K562 (cell line): ENCODE measurements at regions of chr13 and their contacts with region 1.

Region 1: GRCh38 chr13:95480131-95480545 is 72.4 kb upstream of the CLDN10 start:
- DNase-seq: no peak
- ATAC-seq: no peak
- H3K4me3 ChIP-seq: no peak overlapping the region
- H3K27ac ChIP-seq: no peak overlapping the region
- H3K4me1 ChIP-seq: peaks cover 0 to 19% of the 10 kb centered on the region in 2 experiments; a peak in 3 of 5 replicates
- H3K27me3 ChIP-seq: peaks cover 0 to 8% of the 10 kb centered on the region in 2 experiments; a peak in 1 of 5 replicates
- CTCF ChIP-seq: no peak
- EP300 ChIP-seq: no peak
- POLR2A ChIP-seq: no peak
- RAD21 ChIP-seq: no peak

Region 2: GRCh38 chr13:94710881-94711560 is 769.1 kb before region 1 on chr13:
- CTCF ChIA-PET with region 1: no interaction called
- POLR2A ChIA-PET with region 1: no interaction called
- in situ Hi-C with region 1: no loop called
- intact Hi-C with region 1: loop called (anchors 5 kb)
- DNase-seq: peak; percentile 21 to 62 (median 54)
- ATAC-seq: peak; percentile 81
- H3K4me3 ChIP-seq: no peak overlapping the region
- H3K27ac ChIP-seq: no peak overlapping the region
- H3K4me1 ChIP-seq: peaks cover 2 to 37% of the 10 kb centered on the region in 2 experiments; a peak in 2 of 5 replicates
- H3K27me3 ChIP-seq: peaks cover 27 to 38% of the 10 kb centered on the region in 2 experiments; a peak in 4 of 5 replicates
- CTCF ChIP-seq: peak in 2 of 3 experiments; percentile 18 to 35; a peak in 2 of 6 replicates
- EP300 ChIP-seq: no peak
- POLR2A ChIP-seq: no peak
- RAD21 ChIP-seq: peak in 1 of 2 experiments; percentile 13; a peak in 1 of 4 replicates

Region 3: DNA sequence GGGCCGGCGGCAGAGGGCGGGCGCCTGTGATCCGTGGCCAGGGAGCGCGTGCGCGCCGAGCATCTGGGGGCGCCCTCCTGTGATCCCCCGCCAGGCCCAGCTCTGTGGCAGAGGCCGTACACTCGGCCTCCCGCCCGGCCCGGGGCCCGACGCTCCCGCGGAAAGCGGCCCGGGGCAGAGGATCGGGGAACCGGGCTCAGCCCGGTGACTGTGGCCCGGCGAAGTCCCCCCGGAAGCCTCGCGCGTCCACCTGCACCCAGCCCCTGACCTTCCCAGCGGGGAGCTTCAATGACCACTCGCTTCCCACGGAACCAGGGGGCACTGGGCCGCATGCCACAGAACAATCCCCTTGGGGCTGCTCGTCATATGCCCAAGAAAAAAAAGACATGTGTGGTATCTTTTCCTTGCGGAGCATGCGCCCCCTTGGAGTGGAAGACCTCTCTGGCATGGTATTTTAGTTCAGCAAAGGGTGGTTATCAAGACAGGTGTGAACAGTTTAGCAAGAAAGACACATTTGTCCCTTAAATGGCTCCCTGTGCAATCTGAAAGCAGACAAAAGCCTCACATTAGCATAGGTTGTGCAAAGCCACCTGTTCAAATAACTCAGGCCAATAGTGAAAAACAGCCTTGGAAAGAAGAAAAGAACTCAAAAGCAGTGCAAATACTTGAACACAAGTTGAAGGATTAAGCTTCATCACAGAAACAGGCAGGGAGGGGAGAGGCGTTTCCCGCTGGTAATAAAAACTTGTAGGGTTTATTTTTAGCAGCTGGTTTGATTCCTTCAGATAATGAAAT is 476.9 kb before region 1 on chr13:
- CTCF ChIA-PET with region 1: no interaction called
- POLR2A ChIA-PET with region 1: interaction called, 3 read pairs
- in situ Hi-C with region 1: no loop called
- intact Hi-C with region 1: loop called (anchors 10 kb)
- DNase-seq: no peak
- ATAC-seq: no peak
- H3K4me3 ChIP-seq: no peak overlapping the region
- H3K27ac ChIP-seq: no peak overlapping the region
- H3K4me1 ChIP-seq: no peaks in the 10 kb centered on the region
- H3K27me3 ChIP-seq: peaks cover 0 to 10% of the 10 kb centered on the region in 2 experiments; a peak in 3 of 5 replicates
- CTCF ChIP-seq: no peak
- EP300 ChIP-seq: no peak
- POLR2A ChIP-seq: no peak
- RAD21 ChIP-seq: no peak

Region 4: DNA sequence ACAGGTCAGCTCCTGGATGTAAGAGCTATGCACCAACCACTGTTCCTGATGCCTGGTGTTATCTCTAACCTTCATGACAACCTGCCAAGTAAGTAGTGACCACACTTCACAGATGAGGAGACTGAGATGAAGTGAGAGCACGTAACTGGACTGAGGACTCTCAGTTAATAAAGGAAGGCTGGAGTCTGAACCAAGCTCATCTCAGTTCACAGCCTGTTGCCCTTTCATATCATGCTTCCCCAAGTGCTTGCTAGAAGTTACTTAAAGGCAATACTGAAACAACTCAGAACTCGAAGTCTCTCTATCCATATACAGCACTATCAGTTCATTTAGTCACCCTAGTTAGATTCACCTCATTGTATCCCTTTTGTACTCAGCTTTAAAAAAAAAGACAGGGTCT is 298.6 kb before region 1 on chr13:
- CTCF ChIA-PET with region 1: no interaction called
- POLR2A ChIA-PET with region 1: no interaction called
- in situ Hi-C with region 1: loop called (anchors 10 kb)
- intact Hi-C with region 1: no loop called
- DNase-seq: peak in 1 of 4 experiments; percentile 37
- ATAC-seq: peak; percentile 70
- H3K4me3 ChIP-seq: no peak overlapping the region
- H3K27ac ChIP-seq: no peak overlapping the region
- H3K4me1 ChIP-seq: no peaks in the 10 kb centered on the region; a peak in 2 of 5 replicates
- H3K27me3 ChIP-seq: no peaks in the 10 kb centered on the region
- CTCF ChIP-seq: no peak
- EP300 ChIP-seq: no peak
- POLR2A ChIP-seq: no peak
- RAD21 ChIP-seq: no peak

Region 5: GRCh38 chr13:95191821-95192563 is 288.1 kb before region 1 on chr13:
- CTCF ChIA-PET with region 1: interaction called, 9 read pairs
- POLR2A ChIA-PET with region 1: no interaction called
- in situ Hi-C with region 1: loop called (anchors 10 kb)
- intact Hi-C with region 1: loop called (anchors 1 kb)
- DNase-seq: peak; percentile 62 to 82 (median 66)
- ATAC-seq: peak; percentile 100
- H3K4me3 ChIP-seq: no peak overlapping the region
- H3K27ac ChIP-seq: no peak overlapping the region
- H3K4me1 ChIP-seq: 0 out of 5 replicates have a peak, but pooled peaks cover 0 to 3% of the 10 kb centered on the region in 2 experiments
- H3K27me3 ChIP-seq: no peaks in the 10 kb centered on the region
- CTCF ChIP-seq: peak; percentile 78 to 88 (median 88)
- EP300 ChIP-seq: no peak
- POLR2A ChIP-seq: no peak
- RAD21 ChIP-seq: peak; percentile 84 to 91

Region 6: GRCh38 chr13:95275322-95276036 is 204.7 kb before region 1 on chr13:
- CTCF ChIA-PET with region 1: no interaction called
- POLR2A ChIA-PET with region 1: no interaction called
- in situ Hi-C with region 1: no loop called
- intact Hi-C with region 1: loop called (anchors 10 kb)
- DNase-seq: no peak
- ATAC-seq: no peak
- H3K4me3 ChIP-seq: no peak overlapping the region
- H3K27ac ChIP-seq: no peak overlapping the region; the same call in 1 of the 3 replicates
- H3K4me1 ChIP-seq: peaks cover 37 to 52% of the 10 kb centered on the region in 2 experiments; a peak in 4 of 5 replicates
- H3K27me3 ChIP-seq: no peaks in the 10 kb centered on the region
- CTCF ChIP-seq: no peak
- EP300 ChIP-seq: no peak
- POLR2A ChIP-seq: no peak
- RAD21 ChIP-seq: no peak

Region 7: GRCh38 chr13:95536632-95537241 is 56.6 kb after region 1 on chr13:
- CTCF ChIA-PET with region 1: no interaction called
- POLR2A ChIA-PET with region 1: no interaction called
- in situ Hi-C with region 1: no loop called
- intact Hi-C with region 1: no loop called
- DNase-seq: peak in 1 of 4 experiments; percentile 11
- ATAC-seq: no peak
- H3K4me3 ChIP-seq: no peak overlapping the region
- H3K27ac ChIP-seq: no peak overlapping the region
- H3K4me1 ChIP-seq: no peaks in the 10 kb centered on the region
- H3K27me3 ChIP-seq: no peaks in the 10 kb centered on the region
- CTCF ChIP-seq: peak in 2 of 3 experiments; percentile 39 to 55; a peak in 4 of 6 replicates
- EP300 ChIP-seq: no peak
- POLR2A ChIP-seq: no peak
- RAD21 ChIP-seq: peak; percentile 26 to 53